HepG2 (cell line): ENCODE measurements at regions of chr6 and their contacts with region 1.

Region 1: DNA sequence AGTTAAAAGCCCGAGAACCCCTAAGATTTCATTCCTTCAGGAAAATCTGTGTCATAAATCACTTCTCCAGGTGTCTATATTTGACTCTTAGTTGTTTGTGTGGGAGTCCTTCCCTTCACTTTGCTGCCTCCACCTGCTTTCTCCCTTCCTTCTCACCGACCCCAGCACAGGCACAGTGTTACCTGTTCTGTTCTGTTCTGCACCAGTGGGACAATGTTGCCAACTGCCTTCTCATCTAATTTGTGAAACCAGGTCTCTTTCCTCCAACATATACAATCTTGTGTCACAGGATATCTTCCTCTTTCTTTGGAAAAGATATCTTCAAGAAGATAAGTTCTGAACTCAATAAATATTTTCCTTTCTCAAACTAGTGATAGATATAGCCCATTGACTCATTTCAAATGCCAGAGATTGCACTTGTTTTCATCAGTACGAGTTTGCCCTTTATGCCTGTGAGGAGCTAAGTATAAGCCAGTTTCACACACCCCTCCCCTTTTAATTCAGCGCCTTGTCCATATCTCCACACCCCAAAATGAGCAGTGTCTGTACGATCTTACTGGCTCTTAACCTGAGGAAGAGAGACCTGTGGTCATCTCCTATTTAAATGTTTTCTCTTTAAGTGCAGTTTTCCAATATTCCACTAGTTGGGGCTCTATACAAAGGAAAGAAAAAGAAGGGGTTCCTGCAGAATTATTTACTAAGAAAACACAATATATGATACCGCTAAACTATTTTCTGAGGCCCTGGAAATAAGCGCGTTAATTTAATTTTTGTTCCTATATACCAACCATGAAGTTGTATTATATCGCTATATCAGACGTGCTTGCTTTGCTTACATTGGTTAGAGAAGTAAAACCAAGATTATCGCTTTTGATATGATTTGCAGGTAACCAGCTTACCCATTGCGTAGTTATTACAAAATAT is 81.6 kb upstream of the PREP start:
- DNase-seq: peak; percentile 41
- ATAC-seq: peak; percentile 64
- H3K4me3 ChIP-seq: no peak overlapping the region
- H3K27ac ChIP-seq: no peak overlapping the region
- H3K4me1 ChIP-seq: no peaks in the 10 kb centered on the region
- H3K27me3 ChIP-seq: no peaks in the 10 kb centered on the region
- CTCF ChIP-seq: peak; percentile 60
- EP300 ChIP-seq: no peak
- POLR2A ChIP-seq: no peak
- RAD21 ChIP-seq: peak; percentile 25; the same call in 1 of the 2 replicates

Region 2: GRCh38 chr6:105733565-105734162 is 249.2 kb after region 1 on chr6:
- CTCF ChIA-PET with region 1: no interaction called
- POLR2A ChIA-PET with region 1: no interaction called
- in situ Hi-C with region 1: no loop called
- intact Hi-C with region 1: loop called (anchors 5 kb)
- DNase-seq: peak; percentile 5
- ATAC-seq: no peak
- H3K4me3 ChIP-seq: no peak overlapping the region
- H3K27ac ChIP-seq: no peak overlapping the region
- H3K4me1 ChIP-seq: no peaks in the 10 kb centered on the region
- H3K27me3 ChIP-seq: no peaks in the 10 kb centered on the region
- CTCF ChIP-seq: peak; percentile 39
- EP300 ChIP-seq: no peak
- POLR2A ChIP-seq: no peak
- RAD21 ChIP-seq: no peak

Region 3: GRCh38 chr6:105835373-105835772 is 350.9 kb after region 1 on chr6:
- CTCF ChIA-PET with region 1: interaction called, 5 read pairs
- POLR2A ChIA-PET with region 1: no interaction called
- in situ Hi-C with region 1: loop called (anchors 25 kb)
- intact Hi-C with region 1: loop called (anchors 1 kb)
- DNase-seq: peak; percentile 31
- ATAC-seq: peak; percentile 81
- H3K4me3 ChIP-seq: no peak overlapping the region
- H3K27ac ChIP-seq: no peak overlapping the region
- H3K4me1 ChIP-seq: no peaks in the 10 kb centered on the region
- H3K27me3 ChIP-seq: no peaks in the 10 kb centered on the region
- CTCF ChIP-seq: peak; percentile 37
- EP300 ChIP-seq: no peak
- POLR2A ChIP-seq: no peak
- RAD21 ChIP-seq: no peak

Region 4: GRCh38 chr6:106223300-106223930 is 738.9 kb after region 1 on chr6:
- CTCF ChIA-PET with region 1: no interaction called
- POLR2A ChIA-PET with region 1: no interaction called
- in situ Hi-C with region 1: no loop called
- intact Hi-C with region 1: loop called (anchors 2 kb)
- DNase-seq: peak; percentile 46
- ATAC-seq: peak; percentile 71
- H3K4me3 ChIP-seq: no peak overlapping the region
- H3K27ac ChIP-seq: no peak overlapping the region
- H3K4me1 ChIP-seq: peaks cover 13% of the 10 kb centered on the region
- H3K27me3 ChIP-seq: no peaks in the 10 kb centered on the region
- CTCF ChIP-seq: peak; percentile 62
- EP300 ChIP-seq: no peak
- POLR2A ChIP-seq: no peak
- RAD21 ChIP-seq: 0 out of 2 replicates have a peak, but pooled peaks have one; percentile 37